Calu3 (cell line): ENCODE measurements at regions of chr1 and their contacts with region 1.

Region 1: GRCh38 chr1:218546309-218546708 is 201.2 kb downstream of the TGFB2 start:
- DNase-seq: peak; percentile 24
- H3K4me3 Mint-ChIP-seq: no peak overlapping the region
- H3K27ac Mint-ChIP-seq: peak overlapping the region; percentile 0
- H3K4me1 Mint-ChIP-seq: peaks cover 38% of the 10 kb centered on the region
- H3K27me3 Mint-ChIP-seq: no peaks in the 10 kb centered on the region
- CTCF ChIP-seq: no peak

Region 2: DNA sequence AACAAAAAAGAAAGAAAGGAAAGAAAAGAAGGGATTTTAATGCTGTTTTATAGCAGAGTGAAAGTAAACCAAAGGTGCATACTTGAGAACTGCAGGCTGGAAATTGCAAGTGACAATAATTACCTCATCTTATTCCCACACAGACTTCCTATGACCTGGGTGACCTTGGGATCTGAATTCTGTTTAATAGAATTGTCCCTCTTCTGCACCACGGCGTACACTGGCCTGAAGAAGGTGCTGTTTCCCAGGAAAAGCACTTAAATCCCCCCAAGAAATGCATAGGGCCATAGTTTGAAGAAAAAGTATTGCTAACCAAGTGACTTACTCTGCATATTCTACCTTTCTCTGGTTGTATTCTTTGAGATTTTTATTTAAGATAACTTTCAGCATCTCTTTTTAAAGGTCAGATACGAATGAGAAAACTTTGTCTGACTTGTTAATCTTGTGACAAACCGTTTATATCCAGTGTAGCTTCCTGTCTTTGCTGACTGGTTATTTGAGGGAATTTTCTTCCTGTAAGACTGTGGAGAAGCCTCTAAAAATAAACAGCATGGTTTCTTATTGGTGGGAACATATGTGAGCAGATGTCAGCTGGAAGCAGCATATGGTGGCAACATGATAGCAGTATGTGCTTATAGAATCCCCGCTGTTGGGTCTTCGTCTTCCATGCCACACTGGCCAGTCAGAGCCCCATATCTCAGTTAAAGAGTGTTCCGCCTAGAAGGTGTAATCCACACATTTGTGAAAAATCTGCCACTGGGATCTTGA is 184.8 kb before region 1 on chr1:
- CTCF ChIA-PET with region 1: interaction called, 4 read pairs
- intact Hi-C with region 1: loop called (anchors 5 kb)
- DNase-seq: no peak
- H3K4me3 Mint-ChIP-seq: no peak overlapping the region
- H3K27ac Mint-ChIP-seq: no peak overlapping the region
- H3K4me1 Mint-ChIP-seq: peaks cover 52% of the 10 kb centered on the region
- H3K27me3 Mint-ChIP-seq: no peaks in the 10 kb centered on the region
- CTCF ChIP-seq: peak; percentile 38

Region 3: GRCh38 chr1:218480137-218480536 is 66.2 kb before region 1 on chr1:
- CTCF ChIA-PET with region 1: interaction called, 4 read pairs
- intact Hi-C with region 1: loop called (anchors 2 kb)
- DNase-seq: no peak
- H3K4me3 Mint-ChIP-seq: no peak overlapping the region
- H3K27ac Mint-ChIP-seq: peak overlapping the region; percentile 79
- H3K4me1 Mint-ChIP-seq: peaks cover 59% of the 10 kb centered on the region
- H3K27me3 Mint-ChIP-seq: no peaks in the 10 kb centered on the region
- CTCF ChIP-seq: no peak

Region 4: DNA sequence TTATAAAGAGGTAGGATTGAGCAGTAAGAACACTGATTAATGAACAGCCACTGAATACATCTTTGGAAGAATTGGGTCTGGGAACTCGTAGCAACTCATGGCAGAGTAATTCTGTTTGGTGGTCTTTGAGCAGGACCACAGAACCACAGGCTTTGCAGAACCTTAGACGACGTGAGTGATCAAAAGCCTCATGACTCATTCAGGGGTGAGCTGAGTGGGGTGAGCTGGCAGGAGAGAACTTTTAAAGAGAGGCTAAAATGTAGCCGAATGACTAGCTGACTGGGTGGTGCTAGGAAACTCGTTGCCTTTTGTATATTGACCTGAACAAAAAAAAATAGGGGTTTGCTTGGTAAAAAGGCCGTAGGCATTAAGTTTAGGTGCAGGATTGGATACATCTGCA is 112.6 kb after region 1 on chr1:
- CTCF ChIA-PET with region 1: no interaction called
- intact Hi-C with region 1: loop called (anchors 5 kb)
- DNase-seq: peak; percentile 37
- H3K4me3 Mint-ChIP-seq: no peak overlapping the region
- H3K27ac Mint-ChIP-seq: peak overlapping the region; percentile 75
- H3K4me1 Mint-ChIP-seq: peaks cover 59% of the 10 kb centered on the region
- H3K27me3 Mint-ChIP-seq: no peaks in the 10 kb centered on the region
- CTCF ChIP-seq: no peak

Region 5: DNA sequence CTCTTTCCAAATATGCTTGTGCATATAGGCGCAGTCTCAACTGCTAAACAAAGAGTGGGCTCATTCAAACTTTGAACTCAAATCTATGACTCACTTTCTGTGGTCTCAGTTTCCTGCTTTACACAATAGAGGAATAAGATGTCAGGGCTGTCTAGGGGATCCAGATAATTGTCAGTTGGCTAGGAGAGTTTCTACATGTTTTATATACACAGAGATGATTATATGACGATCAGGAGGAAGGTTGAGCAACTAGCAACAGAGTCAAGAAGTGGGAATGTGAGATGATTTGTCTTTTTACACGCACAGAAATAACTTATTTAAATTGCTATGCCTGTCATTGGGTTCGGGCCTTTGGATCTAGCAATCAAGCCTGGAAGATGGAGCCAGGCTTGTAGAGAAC is 328.0 kb after region 1 on chr1:
- CTCF ChIA-PET with region 1: no interaction called
- intact Hi-C with region 1: loop called (anchors 2 kb)
- DNase-seq: peak; percentile 52
- H3K4me3 Mint-ChIP-seq: peak overlapping the region; percentile 47
- H3K27ac Mint-ChIP-seq: peak overlapping the region; percentile 68
- H3K4me1 Mint-ChIP-seq: peaks cover 59% of the 10 kb centered on the region
- H3K27me3 Mint-ChIP-seq: no peaks in the 10 kb centered on the region
- CTCF ChIP-seq: no peak